ENCODE measurements at regions of chr12 and their contacts with region 1.

Region 1: GRCh38 chr12:121223292-121224285 is 13.7 kb downstream of the P2RX4 start:
- DNase-seq: peak in 1 of 5 donors; percentile 37
- H3K4me3 ChIP-seq: no peak overlapping the region
- H3K27ac ChIP-seq: peak overlapping the region in 1 of 2 donors; percentile 74
- H3K4me1 ChIP-seq: peaks cover 5% of the 10 kb centered on the region
- H3K27me3 ChIP-seq: no peaks in the 10 kb centered on the region
- CTCF ChIP-seq: no peak
- EP300 ChIP-seq: no peak
- POLR2A ChIP-seq: no peak

Region 2: GRCh38 chr12:121110211-121110940 is 113.2 kb before region 1 on chr12:
- intact Hi-C with region 1: loop called in 1 of 4 experiments (anchors 10 kb)
- DNase-seq: peak; percentile 68 to 81 (median 70)
- H3K4me3 ChIP-seq: no peak overlapping the region
- H3K27ac ChIP-seq: no peak overlapping the region
- H3K4me1 ChIP-seq: no peaks in the 10 kb centered on the region
- H3K27me3 ChIP-seq: no peaks in the 10 kb centered on the region
- CTCF ChIP-seq: peak; percentile 85 to 92 (median 88)
- EP300 ChIP-seq: no peak
- POLR2A ChIP-seq: no peak

Region 3: DNA sequence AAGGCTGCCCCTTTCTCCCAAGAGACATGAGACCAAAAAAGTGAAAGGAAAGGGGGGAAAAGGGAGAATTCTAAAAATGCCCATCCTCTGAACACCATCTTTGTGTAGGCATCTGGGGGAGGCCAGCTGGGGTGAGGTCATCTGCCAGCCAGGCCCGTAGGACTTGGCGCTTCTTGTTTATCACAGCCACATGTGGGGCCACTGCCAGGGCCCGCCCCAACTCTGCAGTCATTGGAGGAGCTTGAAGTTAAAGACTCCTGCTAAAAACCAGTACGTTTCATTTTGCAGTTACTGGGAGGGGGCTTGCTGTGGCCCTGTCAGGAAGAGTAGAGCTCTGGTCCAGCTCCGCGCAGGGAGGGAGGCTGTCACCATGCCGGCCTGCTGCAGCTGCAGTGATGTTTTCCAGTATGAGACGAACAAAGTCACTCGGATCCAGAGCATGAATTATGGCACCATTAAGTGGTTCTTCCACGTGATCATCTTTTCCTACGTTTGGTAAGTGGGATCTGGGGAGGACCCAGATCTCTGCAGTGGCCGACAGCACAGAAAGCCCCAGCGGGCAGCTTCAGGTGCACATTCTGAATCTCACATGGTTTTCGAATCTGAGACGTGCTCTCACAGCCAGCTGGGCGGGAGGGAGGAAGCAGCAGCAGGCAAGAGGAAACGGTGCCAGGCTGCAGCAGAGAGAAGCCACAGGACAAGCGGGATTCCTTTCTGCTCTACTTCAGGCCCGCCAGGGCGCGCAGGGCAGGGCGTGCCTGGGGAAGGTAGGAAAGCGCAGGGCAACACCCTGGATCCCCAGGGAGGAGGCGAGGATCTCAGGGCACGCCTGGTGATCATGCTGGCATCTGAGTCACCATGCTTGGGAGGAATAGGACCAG is 90.7 kb before region 1 on chr12 and contains the start of gene P2RX7:
- intact Hi-C with region 1: loop called in 1 of 4 experiments (anchors 10 kb)
- DNase-seq: peak; percentile 60 to 80 (median 72)
- H3K4me3 ChIP-seq: peak within 1 kb of the TSS; percentile 40
- H3K27ac ChIP-seq: peak within 1 kb of the TSS in 1 of 2 donors; percentile 52
- H3K4me1 ChIP-seq: peaks cover 6% of the 10 kb centered on the region
- H3K27me3 ChIP-seq: no peaks in the 10 kb centered on the region
- CTCF ChIP-seq: no peak
- EP300 ChIP-seq: no peak
- POLR2A ChIP-seq: peak; percentile 16
- total RNA-seq, gene P2RX7: 4.7 to 10.8 (median 6.9) TPM

Region 4: GRCh38 chr12:121175383-121176227 is 48.0 kb before region 1 on chr12:
- intact Hi-C with region 1: loop called in 1 of 4 experiments (anchors 10 kb)
- DNase-seq: peak; percentile 60 to 80 (median 74)
- H3K4me3 ChIP-seq: no peak overlapping the region
- H3K27ac ChIP-seq: peak overlapping the region; percentile 22 to 88
- H3K4me1 ChIP-seq: peaks cover 22% of the 10 kb centered on the region
- H3K27me3 ChIP-seq: no peaks in the 10 kb centered on the region
- CTCF ChIP-seq: no peak
- EP300 ChIP-seq: no peak
- POLR2A ChIP-seq: no peak

Measured in ovary (tissue), 10 donors.